Thyroid gland (tissue), 4 donors: ENCODE measurements at regions of chr19 and their contacts with region 1.

Region 1: GRCh38 chr19:30222428-30222873 is 149.7 kb upstream of the ZNF536 start:
- DNase-seq: peak; percentile 29 to 37
- H3K4me3 ChIP-seq: peak overlapping the region in 1 of 3 donors; percentile 5
- H3K27ac ChIP-seq: no peak overlapping the region
- H3K4me1 ChIP-seq: peaks cover 8 to 24% of the 10 kb centered on the region in 2 donors
- H3K27me3 ChIP-seq: no peaks in the 10 kb centered on the region
- CTCF ChIP-seq: peak; percentile 19 to 84 (median 66)
- POLR2A ChIP-seq: no peak

Region 2: GRCh38 chr19:30406220-30407067 is 184.0 kb after region 1 on chr19:
- intact Hi-C with region 1: loop called (anchors 5 kb)
- DNase-seq: peak; percentile 54 to 60
- H3K4me3 ChIP-seq: no peak overlapping the region
- H3K27ac ChIP-seq: no peak overlapping the region
- H3K4me1 ChIP-seq: no peaks in the 10 kb centered on the region
- H3K27me3 ChIP-seq: no peaks in the 10 kb centered on the region
- CTCF ChIP-seq: peak in 5 of 6 experiments; percentile 26 to 78 (median 74)
- POLR2A ChIP-seq: no peak

Region 3: DNA sequence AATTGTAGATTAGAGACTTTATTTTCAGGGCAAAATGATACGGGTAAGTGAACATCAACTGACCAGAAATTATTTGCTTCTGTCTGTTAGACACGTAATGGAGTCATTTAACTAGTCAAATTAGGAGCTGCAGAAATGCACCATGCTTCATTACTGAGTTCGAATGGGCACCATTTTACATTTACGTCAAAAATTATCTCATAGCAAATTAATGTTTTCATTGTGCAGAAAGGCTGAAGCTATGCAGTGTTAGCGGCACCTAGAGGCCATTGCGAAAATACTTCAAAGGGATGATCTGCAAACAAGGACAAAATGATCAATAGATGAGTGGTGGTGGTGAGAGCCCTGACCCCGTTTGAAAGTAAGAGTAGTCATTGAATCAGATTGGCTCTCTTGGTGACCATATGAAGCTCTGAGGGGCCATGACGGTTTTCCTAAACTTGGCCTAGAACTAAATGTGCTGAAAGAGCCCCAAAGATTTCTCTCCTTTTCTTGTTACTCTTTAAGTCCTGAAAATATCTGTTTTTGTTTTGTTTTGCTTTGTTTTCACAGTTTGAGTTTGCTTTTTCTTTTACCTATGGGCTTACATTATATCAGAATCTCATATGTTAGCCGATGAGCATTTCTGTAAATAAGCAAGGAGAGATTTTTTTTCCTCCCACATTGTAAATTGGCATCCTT is 427.6 kb after region 1 on chr19:
- intact Hi-C with region 1: loop called (anchors 5 kb)
- DNase-seq: peak; percentile 33 to 41
- H3K4me3 ChIP-seq: no peak overlapping the region
- H3K27ac ChIP-seq: no peak overlapping the region
- H3K4me1 ChIP-seq: peaks cover 11 to 12% of the 10 kb centered on the region in 2 donors
- H3K27me3 ChIP-seq: no peaks in the 10 kb centered on the region
- CTCF ChIP-seq: peak; percentile 33 to 88 (median 68)
- POLR2A ChIP-seq: no peak